IMR-90 (cell line): ENCODE measurements at regions of chr17 and their contacts with region 1.

Region 1: GRCh38 chr17:70767102-70767701 is 597.9 kb downstream of the KCNJ2 start:
- DNase-seq: peak; percentile 59
- ATAC-seq: peak; percentile 51; the same call in 1 of the 2 replicates
- H3K4me3 ChIP-seq: no peak overlapping the region
- H3K27ac ChIP-seq: no peak overlapping the region
- H3K4me1 ChIP-seq: no peaks in the 10 kb centered on the region
- H3K27me3 ChIP-seq: no peaks in the 10 kb centered on the region
- CTCF ChIP-seq: peak; percentile 78
- POLR2A ChIP-seq: no peak
- RAD21 ChIP-seq: peak; percentile 86

Region 2: GRCh38 chr17:70636517-70637133 is 130.6 kb before region 1 on chr17:
- CTCF ChIA-PET with region 1: no interaction called
- POLR2A ChIA-PET with region 1: no interaction called
- dilution Hi-C with region 1: no loop called
- in situ Hi-C with region 1: no loop called
- intact Hi-C with region 1: loop called (anchors 1 kb)
- DNase-seq: peak; percentile 46
- ATAC-seq: peak; percentile 70
- H3K4me3 ChIP-seq: no peak overlapping the region
- H3K27ac ChIP-seq: no peak overlapping the region
- H3K4me1 ChIP-seq: no peaks in the 10 kb centered on the region
- H3K27me3 ChIP-seq: peaks cover 7% of the 10 kb centered on the region; the same call in 1 of the 2 replicates
- CTCF ChIP-seq: peak; percentile 73
- POLR2A ChIP-seq: no peak
- RAD21 ChIP-seq: peak; percentile 79

Region 3: DNA sequence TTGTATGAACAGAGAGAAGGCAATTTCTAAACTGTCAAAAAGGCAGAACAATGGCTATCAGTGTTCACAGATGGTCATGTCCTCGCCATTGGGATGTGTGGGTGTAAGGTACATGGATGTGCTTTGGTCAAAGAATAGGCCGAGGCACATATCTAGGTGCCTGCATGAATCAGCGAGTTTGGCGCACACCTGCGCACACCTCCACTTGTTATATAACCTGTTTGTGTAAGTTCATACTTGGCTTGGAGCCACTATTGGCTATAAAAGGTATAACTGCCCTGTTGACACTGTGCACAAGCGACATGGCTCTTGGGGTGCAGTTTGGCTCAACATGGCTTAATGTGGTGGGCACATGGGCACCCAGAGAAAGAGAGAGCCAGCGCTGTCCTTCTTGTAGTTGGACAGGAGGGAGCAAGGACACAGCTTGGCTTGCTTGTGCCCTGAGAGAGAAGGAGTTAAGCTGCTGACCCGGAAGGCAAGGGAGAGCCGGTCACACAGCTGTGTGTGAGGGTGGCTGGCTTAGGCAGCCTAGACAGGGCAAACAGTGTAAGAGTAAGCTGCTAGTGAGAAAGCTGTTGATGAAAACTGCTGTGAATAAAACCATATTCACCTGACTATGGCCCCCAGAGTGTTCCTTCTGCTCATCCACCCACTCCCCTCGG is 98.8 kb before region 1 on chr17:
- CTCF ChIA-PET with region 1: no interaction called
- POLR2A ChIA-PET with region 1: no interaction called
- dilution Hi-C with region 1: no loop called
- in situ Hi-C with region 1: no loop called
- intact Hi-C with region 1: no loop called
- DNase-seq: no peak
- ATAC-seq: no peak
- H3K4me3 ChIP-seq: no peak overlapping the region
- H3K27ac ChIP-seq: no peak overlapping the region
- H3K4me1 ChIP-seq: no peaks in the 10 kb centered on the region
- H3K27me3 ChIP-seq: no peaks in the 10 kb centered on the region; the same call in 1 of the 2 replicates
- CTCF ChIP-seq: no peak
- POLR2A ChIP-seq: no peak
- RAD21 ChIP-seq: no peak

Region 4: DNA sequence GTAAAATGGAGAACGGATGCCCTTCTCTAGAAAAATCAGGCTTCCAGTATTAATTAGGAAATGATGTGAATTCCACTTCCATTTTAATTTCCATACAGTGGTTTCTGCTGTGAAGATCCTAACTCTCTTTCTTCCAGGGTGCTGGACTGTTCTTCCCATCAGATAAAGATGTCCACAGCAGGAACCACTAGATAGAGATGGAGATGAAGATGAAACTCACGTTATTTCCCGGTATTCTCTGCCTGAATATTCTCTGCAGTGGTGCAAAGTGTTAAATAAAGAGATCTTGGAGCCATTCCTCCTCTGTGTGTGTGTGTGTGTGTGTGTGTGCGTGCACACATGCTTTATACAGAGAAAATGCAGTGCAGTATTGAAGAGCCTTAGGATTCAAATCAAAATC is 129.6 kb after region 1 on chr17:
- CTCF ChIA-PET with region 1: interaction called, 10 read pairs
- POLR2A ChIA-PET with region 1: no interaction called
- dilution Hi-C with region 1: no loop called
- in situ Hi-C with region 1: no loop called
- intact Hi-C with region 1: no loop called
- DNase-seq: no peak
- ATAC-seq: no peak
- H3K4me3 ChIP-seq: no peak overlapping the region
- H3K27ac ChIP-seq: no peak overlapping the region
- H3K4me1 ChIP-seq: no peaks in the 10 kb centered on the region
- H3K27me3 ChIP-seq: no peaks in the 10 kb centered on the region
- CTCF ChIP-seq: no peak
- POLR2A ChIP-seq: no peak
- RAD21 ChIP-seq: no peak

Region 5: GRCh38 chr17:71084219-71084618 is 317.0 kb after region 1 on chr17:
- CTCF ChIA-PET with region 1: interaction called, 13 read pairs
- POLR2A ChIA-PET with region 1: no interaction called
- dilution Hi-C with region 1: no loop called
- in situ Hi-C with region 1: no loop called
- intact Hi-C with region 1: loop called (anchors 2 kb)
- DNase-seq: peak; percentile 22
- ATAC-seq: peak; percentile 53
- H3K4me3 ChIP-seq: no peak overlapping the region
- H3K27ac ChIP-seq: no peak overlapping the region
- H3K4me1 ChIP-seq: no peaks in the 10 kb centered on the region
- H3K27me3 ChIP-seq: no peaks in the 10 kb centered on the region
- CTCF ChIP-seq: peak; percentile 45
- POLR2A ChIP-seq: no peak
- RAD21 ChIP-seq: peak; percentile 47

Region 6: DNA sequence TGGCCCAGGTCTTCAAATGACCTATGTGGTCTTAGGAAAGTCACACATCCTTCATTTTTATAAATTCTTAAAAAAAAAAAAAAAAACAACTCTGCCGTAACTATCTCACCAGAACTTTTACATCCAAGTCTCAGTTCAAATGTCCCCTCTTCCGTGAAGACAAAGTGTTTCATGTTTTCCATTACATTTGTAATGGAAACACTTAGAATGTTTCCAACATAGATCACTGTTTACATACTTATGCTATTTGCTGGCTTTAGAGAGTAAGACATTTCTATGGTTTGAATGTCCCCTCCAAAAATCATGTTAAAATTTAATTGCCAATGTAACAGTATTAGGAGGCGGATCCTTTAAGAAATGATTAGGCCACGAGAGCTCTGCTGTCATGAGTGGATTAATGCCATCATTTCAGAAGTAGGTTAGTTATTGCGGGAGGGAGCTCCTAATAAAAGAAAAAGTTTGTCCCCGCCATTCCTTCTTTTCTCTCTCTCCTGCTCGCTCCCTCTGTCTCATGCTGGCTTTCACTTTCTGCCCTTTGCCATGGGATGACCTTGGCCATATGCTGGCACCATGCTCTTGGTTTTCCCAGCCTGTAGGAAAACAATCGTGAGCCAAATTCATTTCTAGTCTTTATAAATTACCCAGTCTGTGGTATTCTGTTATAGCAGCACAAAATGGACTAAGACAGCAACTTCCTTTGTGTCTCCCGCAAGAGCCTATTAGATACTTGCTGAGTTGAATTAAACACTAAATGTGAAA is 465.8 kb after region 1 on chr17:
- CTCF ChIA-PET with region 1: interaction called, 3 read pairs
- POLR2A ChIA-PET with region 1: no interaction called
- dilution Hi-C with region 1: no loop called
- in situ Hi-C with region 1: no loop called
- intact Hi-C with region 1: loop called (anchors 2 kb)
- DNase-seq: peak; percentile 62
- ATAC-seq: peak; percentile 48
- H3K4me3 ChIP-seq: no peak overlapping the region
- H3K27ac ChIP-seq: peak overlapping the region; percentile 15; the same call in 1 of the 2 replicates
- H3K4me1 ChIP-seq: peaks cover 5% of the 10 kb centered on the region; the same call in 1 of the 2 replicates
- H3K27me3 ChIP-seq: no peaks in the 10 kb centered on the region
- CTCF ChIP-seq: no peak
- POLR2A ChIP-seq: no peak
- RAD21 ChIP-seq: no peak

Region 7: GRCh38 chr17:71460943-71461342 is 693.7 kb after region 1 on chr17:
- CTCF ChIA-PET with region 1: interaction called, 15 read pairs
- POLR2A ChIA-PET with region 1: no interaction called
- dilution Hi-C with region 1: no loop called
- in situ Hi-C with region 1: no loop called
- intact Hi-C with region 1: loop called (anchors 1 kb)
- DNase-seq: peak; percentile 43
- ATAC-seq: no peak
- H3K4me3 ChIP-seq: no peak overlapping the region
- H3K27ac ChIP-seq: no peak overlapping the region
- H3K4me1 ChIP-seq: no peaks in the 10 kb centered on the region
- H3K27me3 ChIP-seq: no peaks in the 10 kb centered on the region
- CTCF ChIP-seq: peak; percentile 53
- POLR2A ChIP-seq: no peak
- RAD21 ChIP-seq: peak; percentile 63

Region 8: DNA sequence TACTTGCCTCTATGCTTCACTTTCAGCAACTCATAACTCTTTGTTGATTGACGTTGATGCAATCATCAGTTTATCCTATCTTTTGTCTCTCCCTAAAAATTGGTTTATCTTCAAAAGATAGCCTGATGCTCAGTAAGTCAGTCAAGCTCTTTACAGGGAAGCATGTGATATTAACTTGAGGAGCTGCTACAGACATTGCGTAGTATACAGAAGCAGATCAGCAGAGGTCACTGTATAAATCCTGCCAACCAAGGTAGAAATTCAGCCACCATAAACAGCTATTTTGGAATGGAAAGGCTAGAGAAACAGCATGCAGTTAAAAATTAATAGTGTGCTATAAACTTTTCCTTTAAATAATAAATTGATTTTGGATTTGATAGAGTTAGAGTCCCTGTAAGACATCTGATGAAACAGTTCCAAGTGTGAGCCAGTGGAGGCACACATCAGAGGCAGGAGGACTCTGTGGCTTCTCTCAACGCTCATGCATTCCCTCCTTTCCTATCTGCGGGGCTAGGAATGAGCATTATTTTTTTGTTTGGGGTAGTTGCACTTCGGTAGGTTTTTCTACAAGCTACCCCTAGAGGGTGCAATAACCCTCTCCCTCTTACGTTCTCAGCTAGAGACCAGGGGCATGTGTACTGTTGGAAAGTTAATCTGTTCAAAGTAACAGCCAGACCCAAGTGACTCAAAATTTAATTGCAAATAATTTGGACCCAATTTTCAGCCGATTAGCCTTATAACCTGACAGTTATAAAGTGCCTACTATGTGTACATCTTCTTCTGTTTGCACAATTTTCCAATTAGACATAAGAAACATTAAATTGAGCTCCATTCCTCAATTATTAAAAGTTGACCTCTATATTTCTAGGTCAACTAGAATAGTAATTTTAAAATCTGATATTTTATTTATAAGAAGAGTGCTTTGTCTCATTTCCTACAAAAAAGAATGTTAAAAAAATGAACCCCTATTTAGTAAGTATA is 705.9 kb after region 1 on chr17:
- CTCF ChIA-PET with region 1: no interaction called
- POLR2A ChIA-PET with region 1: no interaction called
- dilution Hi-C with region 1: no loop called
- in situ Hi-C with region 1: no loop called
- intact Hi-C with region 1: loop called (anchors 2 kb)
- DNase-seq: peak; percentile 70
- ATAC-seq: peak; percentile 95
- H3K4me3 ChIP-seq: no peak overlapping the region
- H3K27ac ChIP-seq: no peak overlapping the region
- H3K4me1 ChIP-seq: no peaks in the 10 kb centered on the region
- H3K27me3 ChIP-seq: no peaks in the 10 kb centered on the region
- CTCF ChIP-seq: peak; percentile 80
- POLR2A ChIP-seq: no peak
- RAD21 ChIP-seq: peak; percentile 84

Region 9: DNA sequence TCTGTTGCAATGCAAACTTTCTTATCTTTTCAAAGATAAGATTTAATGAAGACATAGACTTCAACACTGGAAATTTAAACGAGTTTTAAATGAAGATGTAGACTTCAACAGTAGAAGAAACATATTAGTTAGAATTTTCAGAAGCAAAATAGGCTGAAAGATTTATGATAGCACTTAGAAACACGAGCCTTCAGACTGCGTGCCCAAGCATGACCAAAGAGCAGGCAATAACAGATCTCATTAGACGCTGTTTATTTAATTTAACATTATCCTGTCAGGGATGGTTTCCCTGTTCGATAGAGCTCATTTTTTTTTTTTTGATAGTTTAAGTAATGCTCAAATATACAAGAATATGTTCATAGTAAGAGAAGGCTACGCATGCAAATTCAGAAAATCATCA is 748.9 kb after region 1 on chr17:
- CTCF ChIA-PET with region 1: no interaction called
- POLR2A ChIA-PET with region 1: no interaction called
- dilution Hi-C with region 1: no loop called
- in situ Hi-C with region 1: no loop called
- intact Hi-C with region 1: no loop called
- DNase-seq: no peak
- ATAC-seq: no peak
- H3K4me3 ChIP-seq: no peak overlapping the region
- H3K27ac ChIP-seq: no peak overlapping the region
- H3K4me1 ChIP-seq: 0 out of 2 replicates have a peak, but pooled peaks cover 2% of the 10 kb centered on the region
- H3K27me3 ChIP-seq: no peaks in the 10 kb centered on the region
- CTCF ChIP-seq: no peak
- POLR2A ChIP-seq: no peak
- RAD21 ChIP-seq: no peak